ENCODE measurements at regions of chr5 and their contacts with region 1.

Region 1: DNA sequence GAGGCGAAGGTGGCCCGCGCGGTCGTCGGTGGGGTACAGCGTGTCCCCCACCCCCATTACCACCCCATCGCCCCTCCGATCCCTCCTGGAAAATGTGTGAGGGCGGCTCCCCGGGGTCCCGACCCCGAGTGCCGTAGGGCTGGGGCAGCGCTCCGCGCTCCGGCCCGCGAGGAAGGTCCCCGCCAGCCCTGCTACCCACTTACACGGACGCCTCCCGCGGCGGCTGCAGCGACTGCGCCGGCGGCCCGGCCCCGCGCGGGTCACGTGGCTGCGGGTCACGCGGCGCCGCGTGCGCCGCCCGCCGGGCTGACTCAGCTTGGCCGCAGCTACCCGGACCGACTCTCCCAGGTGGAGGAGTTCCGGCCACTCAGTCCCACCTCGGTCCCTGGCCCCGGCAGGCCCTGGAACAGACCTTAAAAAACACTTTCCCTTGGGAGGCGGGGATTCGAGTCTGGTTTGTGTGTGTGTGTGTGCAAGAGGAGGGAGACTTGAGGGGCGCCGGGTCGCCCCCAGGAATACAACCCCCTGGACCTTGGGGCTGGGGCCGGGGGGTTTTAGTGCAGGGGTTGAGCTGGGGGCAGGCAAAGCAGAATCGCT is at the start of gene GNPDA1:
- DNase-seq: peak; percentile 74
- ATAC-seq: peak; percentile 9
- H3K4me3 Mint-ChIP-seq: peak within 1 kb of the TSS; percentile 89
- H3K27ac Mint-ChIP-seq: peak within 1 kb of the TSS; percentile 99
- H3K4me1 Mint-ChIP-seq: peaks cover 80% of the 10 kb centered on the region
- H3K27me3 Mint-ChIP-seq: no peaks in the 10 kb centered on the region
- CTCF ChIP-seq: no peak
- total RNA-seq, gene GNPDA1: 82.4 to 88.3 TPM

Region 2: GRCh38 chr5:141968914-141969608 is 43.8 kb before region 1 on chr5 and contains the start of gene RNF14:
- CTCF ChIA-PET with region 1: interaction called, 55 read pairs
- POLR2A ChIA-PET with region 1: interaction called, 19 read pairs
- intact Hi-C with region 1: loop called (anchors 5 kb)
- DNase-seq: peak; percentile 97
- ATAC-seq: peak; percentile 96
- H3K4me3 Mint-ChIP-seq: peak within 1 kb of the TSS; percentile 85
- H3K27ac Mint-ChIP-seq: peak within 1 kb of the TSS; percentile 97
- H3K4me1 Mint-ChIP-seq: peaks cover 33% of the 10 kb centered on the region
- H3K27me3 Mint-ChIP-seq: no peaks in the 10 kb centered on the region
- CTCF ChIP-seq: peak; percentile 99
- total RNA-seq, gene RNF14: 34.1 to 35.0 TPM

Region 3: DNA sequence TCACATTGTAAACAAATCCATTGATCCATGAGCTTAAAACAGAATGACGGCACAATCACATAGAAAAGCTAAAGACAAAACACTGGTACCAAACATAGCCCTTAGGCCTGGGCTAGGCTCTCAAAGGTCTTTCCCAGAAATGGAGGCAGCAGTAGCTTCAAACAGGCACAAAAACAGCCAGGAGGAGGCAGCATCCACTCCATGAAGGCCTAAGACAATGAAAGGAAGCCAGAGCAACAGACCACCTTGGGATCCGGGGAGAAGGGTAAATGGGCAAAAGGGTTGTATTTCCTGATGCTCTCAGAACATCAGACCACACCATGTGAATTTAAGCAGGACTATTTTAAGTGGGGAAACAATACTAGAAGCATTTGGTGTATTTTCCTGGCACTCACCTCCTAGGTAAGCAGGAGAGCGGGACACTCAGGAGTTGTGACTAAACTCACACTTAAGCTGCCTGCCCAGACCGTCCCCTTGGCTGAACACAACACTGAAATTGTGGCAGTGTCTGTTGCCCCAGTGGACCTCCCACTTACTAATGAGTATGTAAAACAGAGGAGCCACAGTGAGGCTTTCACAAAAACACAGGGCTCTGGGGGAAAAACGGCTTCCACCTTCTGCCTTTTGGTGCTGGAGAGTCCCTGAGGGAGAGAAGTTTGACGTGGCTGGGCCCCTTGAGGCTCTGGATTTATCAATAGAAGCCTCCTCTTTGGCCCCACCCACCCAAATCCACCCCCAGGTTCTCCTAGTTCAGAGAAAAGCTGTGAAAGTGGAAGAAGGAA is 12.0 kb before region 1 on chr5:
- CTCF ChIA-PET with region 1: interaction called, 21 read pairs
- POLR2A ChIA-PET with region 1: interaction called, 52 read pairs
- intact Hi-C with region 1: no loop called
- DNase-seq: peak; percentile 49
- ATAC-seq: peak; percentile 56
- H3K4me3 Mint-ChIP-seq: no peak overlapping the region
- H3K27ac Mint-ChIP-seq: peak overlapping the region; percentile 88
- H3K4me1 Mint-ChIP-seq: peaks cover 44% of the 10 kb centered on the region
- H3K27me3 Mint-ChIP-seq: no peaks in the 10 kb centered on the region
- CTCF ChIP-seq: peak; percentile 51

Region 4: DNA sequence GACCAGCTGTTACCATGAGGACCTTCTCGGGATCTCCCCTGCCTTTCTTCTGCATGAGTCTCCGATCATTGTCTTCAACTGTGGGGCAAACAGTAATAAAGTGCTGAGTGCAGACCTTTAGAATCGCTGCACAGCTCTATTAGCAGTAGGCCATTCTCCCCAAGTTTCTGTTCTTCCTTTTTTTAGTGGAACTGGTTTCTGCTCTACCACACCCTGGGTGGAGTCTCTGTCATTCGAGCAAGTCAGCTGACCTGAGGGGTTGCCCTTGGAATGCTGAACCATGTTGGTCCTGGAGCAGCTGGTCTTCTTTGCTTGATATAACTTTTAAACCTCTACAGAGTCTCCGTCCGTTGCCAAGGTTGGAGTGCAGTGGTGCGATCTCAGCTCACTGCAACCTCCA is 33.3 kb after region 1 on chr5:
- CTCF ChIA-PET with region 1: no interaction called
- POLR2A ChIA-PET with region 1: no interaction called
- intact Hi-C with region 1: no loop called
- DNase-seq: no peak
- ATAC-seq: no peak
- H3K4me3 Mint-ChIP-seq: no peak overlapping the region
- H3K27ac Mint-ChIP-seq: no peak overlapping the region
- H3K4me1 Mint-ChIP-seq: no peaks in the 10 kb centered on the region
- H3K27me3 Mint-ChIP-seq: no peaks in the 10 kb centered on the region
- CTCF ChIP-seq: no peak

Region 5: DNA sequence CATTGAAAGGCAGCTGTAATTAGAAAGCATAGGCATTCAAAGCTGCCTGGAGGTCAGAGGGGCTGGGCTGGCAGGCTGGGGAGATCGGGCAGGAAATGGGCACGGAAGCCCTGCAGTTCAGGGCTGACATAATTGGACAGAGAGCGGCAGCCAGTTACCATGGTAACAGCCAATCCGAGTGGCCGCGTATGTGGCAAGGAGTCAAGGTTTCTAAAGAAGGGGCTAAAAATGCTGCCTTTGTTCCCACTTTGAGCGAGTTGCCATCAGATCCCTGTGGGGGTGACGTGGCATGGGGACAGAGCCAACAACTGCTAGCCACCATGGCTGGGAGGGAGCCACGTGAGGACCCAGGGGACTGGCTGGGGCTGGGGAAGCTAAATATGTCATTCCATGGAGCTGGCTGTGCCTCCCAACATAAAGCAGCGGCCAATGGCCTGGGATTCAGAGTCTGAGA is 51.0 kb after region 1 on chr5:
- CTCF ChIA-PET with region 1: interaction called, 4 read pairs
- POLR2A ChIA-PET with region 1: interaction called, 4 read pairs
- intact Hi-C with region 1: loop called (anchors 5 kb)
- DNase-seq: peak; percentile 74
- ATAC-seq: peak; percentile 93
- H3K4me3 Mint-ChIP-seq: peak overlapping the region; percentile 14
- H3K27ac Mint-ChIP-seq: peak overlapping the region; percentile 19
- H3K4me1 Mint-ChIP-seq: peaks cover 12% of the 10 kb centered on the region
- H3K27me3 Mint-ChIP-seq: no peaks in the 10 kb centered on the region
- CTCF ChIP-seq: no peak

Region 6: GRCh38 chr5:142108432-142109330 is 95.8 kb after region 1 on chr5 and contains the start of gene NDFIP1:
- CTCF ChIA-PET with region 1: interaction called, 57 read pairs
- POLR2A ChIA-PET with region 1: interaction called, 129 read pairs
- intact Hi-C with region 1: loop called (anchors 2 kb)
- DNase-seq: peak; percentile 88
- ATAC-seq: peak; percentile 84
- H3K4me3 Mint-ChIP-seq: peak within 1 kb of the TSS; percentile 93
- H3K27ac Mint-ChIP-seq: peak within 1 kb of the TSS; percentile 96
- H3K4me1 Mint-ChIP-seq: peaks cover 65% of the 10 kb centered on the region
- H3K27me3 Mint-ChIP-seq: no peaks in the 10 kb centered on the region
- CTCF ChIP-seq: no peak
- total RNA-seq, gene NDFIP1: 93.8 to 96.9 TPM

Region 7: DNA sequence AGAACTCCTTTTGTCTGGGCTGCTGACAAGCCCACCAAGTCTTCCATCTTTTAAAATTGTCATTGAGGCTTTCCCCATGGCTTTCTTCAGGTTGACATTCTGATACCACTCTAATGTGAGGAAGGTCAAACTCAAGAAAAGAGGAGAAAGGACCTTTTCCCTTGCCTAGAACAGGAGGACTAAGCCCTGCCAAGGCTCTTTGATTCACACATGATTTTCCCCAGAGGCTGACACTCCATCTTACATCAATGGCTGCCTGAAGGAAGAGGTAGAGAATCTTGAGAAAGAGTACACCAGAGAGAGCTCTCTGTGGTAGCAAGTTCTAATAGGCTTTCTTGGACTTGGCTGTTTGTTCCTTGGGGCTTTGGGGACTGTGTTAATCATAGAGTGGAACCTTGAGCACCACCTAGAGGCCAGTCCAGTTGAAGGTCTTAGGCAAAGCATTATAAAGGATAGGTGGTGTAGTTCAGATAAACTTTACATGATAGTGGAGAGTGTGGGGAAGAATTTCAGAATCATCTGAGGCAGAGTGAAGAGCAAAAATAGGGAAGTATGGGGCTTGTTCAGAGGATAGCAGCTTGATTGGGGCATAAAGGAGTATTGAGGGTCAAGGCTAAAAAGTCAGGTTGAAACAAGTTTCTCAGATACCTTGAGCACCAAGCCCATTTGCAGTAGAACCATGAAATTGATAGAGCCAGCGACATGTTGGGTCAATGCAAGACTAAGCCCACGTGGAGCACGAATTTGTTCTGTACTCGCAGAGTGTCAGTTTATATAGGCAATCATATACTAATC is 132.4 kb after region 1 on chr5:
- CTCF ChIA-PET with region 1: interaction called, 592 read pairs
- POLR2A ChIA-PET with region 1: interaction called, 4 read pairs
- intact Hi-C with region 1: loop called (anchors 1 kb)
- DNase-seq: peak; percentile 84
- ATAC-seq: peak; percentile 90
- H3K4me3 Mint-ChIP-seq: no peak overlapping the region
- H3K27ac Mint-ChIP-seq: no peak overlapping the region
- H3K4me1 Mint-ChIP-seq: peaks cover 5% of the 10 kb centered on the region
- H3K27me3 Mint-ChIP-seq: no peaks in the 10 kb centered on the region
- CTCF ChIP-seq: peak; percentile 65

Measured in activated CD8-positive, alpha-beta T cell treated with anti-CD3 and anti-CD28 coated beads for 36 hours (primary cell).